CD8-positive, alpha-beta T cell (primary cell): ENCODE measurements at regions of chr2 and their contacts with region 1.

Region 1: DNA sequence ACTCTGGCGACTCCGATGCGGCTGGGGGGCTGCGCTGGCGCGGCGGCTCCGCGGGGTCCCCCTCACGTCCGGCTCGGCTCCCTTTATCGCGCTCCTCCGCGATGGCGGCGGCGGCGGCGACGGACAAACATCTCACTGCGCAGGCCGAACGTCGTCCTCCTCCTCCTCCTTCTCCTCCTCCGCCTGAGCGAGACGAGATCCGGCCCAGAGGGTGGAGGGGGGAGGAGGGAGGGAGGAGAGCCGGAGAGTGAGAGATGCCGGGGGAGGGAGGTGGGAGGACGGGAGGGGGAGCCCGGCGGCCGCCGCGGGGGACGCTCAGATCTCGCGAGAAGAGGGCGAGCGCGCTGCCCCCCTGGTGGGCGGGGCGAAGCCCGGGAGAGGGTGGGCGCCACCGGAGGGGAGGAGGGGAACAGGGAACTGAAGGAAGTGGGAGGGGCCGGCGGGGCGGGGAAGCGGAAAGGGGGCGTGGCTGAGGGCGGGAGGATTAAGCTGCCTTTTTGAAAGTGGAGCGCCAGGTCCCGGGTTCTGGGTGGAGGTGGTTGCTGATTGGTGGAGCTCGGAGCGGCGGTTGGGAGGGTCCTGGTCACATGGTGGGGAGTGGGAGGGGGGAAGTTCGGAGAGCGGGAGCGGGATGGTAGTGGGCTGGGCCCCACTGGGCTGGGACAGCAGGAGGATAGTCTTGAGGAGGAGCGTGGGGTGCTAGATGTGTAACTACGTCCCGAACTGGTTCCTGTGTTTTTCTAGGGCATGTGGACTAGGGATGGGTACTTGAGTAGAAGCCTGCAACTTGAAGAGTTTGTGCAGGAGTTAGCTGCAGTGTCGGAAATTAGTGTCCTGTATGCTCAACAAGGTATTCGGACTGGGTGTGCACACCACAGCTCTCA is at the start of gene CUL3:
- DNase-seq: peak; percentile 98 to 100 (median 99)
- ATAC-seq: peak; percentile 91
- H3K4me3 ChIP-seq: peak within 1 kb of the TSS; percentile 78 to 82
- H3K4me3 Mint-ChIP-seq: peak within 1 kb of the TSS; percentile 98
- H3K27ac ChIP-seq: peak within 1 kb of the TSS; percentile 62 to 84
- H3K27ac Mint-ChIP-seq: peak within 1 kb of the TSS; percentile 95
- H3K4me1 ChIP-seq: peaks cover 37% of the 10 kb centered on the region
- H3K4me1 Mint-ChIP-seq: peaks cover 42% of the 10 kb centered on the region
- H3K27me3 ChIP-seq: no peaks in the 10 kb centered on the region
- H3K27me3 Mint-ChIP-seq: no peaks in the 10 kb centered on the region
- CTCF ChIP-seq: no peak
- total RNA-seq, gene CUL3: 119 to 121 TPM

Region 2: DNA sequence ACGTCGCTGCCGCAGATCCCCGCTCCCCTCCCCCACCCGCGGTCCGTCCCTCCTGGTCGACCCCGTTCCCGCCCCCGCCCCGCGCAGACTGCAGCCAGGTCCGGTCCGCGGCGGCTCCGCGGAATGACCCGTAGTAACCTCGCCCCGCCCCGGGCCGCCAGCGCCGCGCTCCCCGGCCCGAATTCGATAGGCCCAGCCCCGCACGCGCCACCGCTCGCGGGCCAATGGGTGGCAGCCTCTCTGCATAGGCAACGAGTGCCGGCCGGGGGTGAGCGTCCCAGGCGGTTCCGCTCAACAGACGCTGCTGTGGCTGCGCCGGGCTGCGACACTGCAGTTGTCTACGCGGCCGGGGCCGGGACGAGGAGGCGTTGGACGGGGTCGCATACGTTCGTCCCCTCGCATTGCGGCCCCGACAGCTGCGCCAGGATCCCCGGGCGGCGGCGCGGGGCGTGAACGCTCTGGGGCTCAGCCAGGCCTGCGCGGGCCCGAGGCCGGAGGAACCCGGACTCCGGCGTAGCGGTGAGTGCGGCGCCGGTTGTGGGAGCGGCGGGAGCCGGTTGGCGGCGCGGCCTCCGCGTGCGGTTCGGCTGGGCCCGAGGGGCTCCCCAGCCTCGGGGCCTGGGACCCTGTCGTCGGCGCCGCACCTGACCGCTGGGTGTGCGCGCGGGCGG is 1724.6 kb before region 1 on chr2 and contains the start of gene ACSL3:
- CTCF ChIA-PET with region 1: no interaction called
- POLR2A ChIA-PET with region 1: no interaction called
- intact Hi-C with region 1: loop called in 1 of 2 experiments (anchors 2 kb)
- DNase-seq: peak; percentile 83 to 93 (median 92)
- ATAC-seq: peak; percentile 96
- H3K4me3 ChIP-seq: peak within 1 kb of the TSS; percentile 64 to 69
- H3K4me3 Mint-ChIP-seq: peak within 1 kb of the TSS; percentile 82
- H3K27ac ChIP-seq: peak within 1 kb of the TSS; percentile 69 to 80
- H3K27ac Mint-ChIP-seq: peak within 1 kb of the TSS; percentile 91
- H3K4me1 ChIP-seq: peaks cover 25% of the 10 kb centered on the region
- H3K4me1 Mint-ChIP-seq: peaks cover 7% of the 10 kb centered on the region
- H3K27me3 ChIP-seq: no peaks in the 10 kb centered on the region
- H3K27me3 Mint-ChIP-seq: no peaks in the 10 kb centered on the region
- CTCF ChIP-seq: no peak
- total RNA-seq, gene ACSL3: 89.5 to 97.6 TPM

Region 3: DNA sequence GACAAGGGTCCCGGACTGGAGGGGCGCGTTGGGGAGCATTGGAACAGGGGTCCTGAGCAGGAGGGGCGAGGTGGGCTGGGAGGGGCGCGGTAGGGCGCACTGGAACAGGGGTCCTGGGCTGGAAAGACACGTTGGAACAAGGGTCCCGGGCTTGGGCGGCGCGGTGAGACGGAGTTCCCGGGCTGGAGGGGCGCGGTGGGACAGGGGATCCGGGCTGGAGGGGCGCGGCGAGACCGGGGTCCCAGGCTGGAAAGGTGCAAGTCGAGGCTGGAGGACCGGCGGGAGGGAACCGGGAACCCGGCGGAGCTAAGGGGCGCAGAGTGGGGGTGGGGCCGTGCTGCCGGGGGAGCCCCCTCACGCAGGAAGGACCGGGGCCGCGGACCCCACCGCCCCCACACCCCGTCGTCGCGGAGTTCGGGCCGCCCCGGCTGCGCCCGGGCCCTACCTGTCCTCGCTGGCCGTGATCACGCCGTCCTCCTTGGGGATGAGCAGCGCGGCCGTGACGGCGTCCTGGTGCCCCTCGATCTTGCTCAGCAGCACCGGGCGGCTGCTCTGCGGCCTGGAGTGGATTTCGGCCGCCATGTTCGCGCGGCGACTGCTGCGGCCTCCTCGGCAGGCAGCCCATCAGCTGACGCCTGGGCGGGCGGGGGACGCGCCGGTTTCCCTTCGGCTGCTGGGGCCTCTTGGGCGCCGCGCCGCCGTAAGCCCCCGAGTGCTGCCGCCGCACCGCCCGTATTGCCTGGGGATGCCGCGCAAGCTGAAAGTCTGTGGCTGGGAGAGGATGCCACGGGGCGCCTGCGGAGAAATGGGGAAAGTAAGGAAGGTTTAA is 640.5 kb before region 1 on chr2 and contains the start of gene WDFY1:
- CTCF ChIA-PET with region 1: no interaction called
- POLR2A ChIA-PET with region 1: no interaction called
- intact Hi-C with region 1: loop called in 1 of 2 experiments (anchors 1 kb)
- DNase-seq: peak; percentile 59 to 88 (median 79)
- ATAC-seq: peak; percentile 82
- H3K4me3 ChIP-seq: peak within 1 kb of the TSS; percentile 83 to 86
- H3K4me3 Mint-ChIP-seq: peak within 1 kb of the TSS; percentile 92
- H3K27ac ChIP-seq: peak within 1 kb of the TSS; percentile 62 to 63
- H3K27ac Mint-ChIP-seq: peak within 1 kb of the TSS; percentile 85
- H3K4me1 ChIP-seq: peaks cover 30% of the 10 kb centered on the region
- H3K4me1 Mint-ChIP-seq: peaks cover 43% of the 10 kb centered on the region
- H3K27me3 ChIP-seq: no peaks in the 10 kb centered on the region
- H3K27me3 Mint-ChIP-seq: no peaks in the 10 kb centered on the region
- CTCF ChIP-seq: no peak
- total RNA-seq, gene WDFY1: 38.6 to 42.6 TPM

Region 4: DNA sequence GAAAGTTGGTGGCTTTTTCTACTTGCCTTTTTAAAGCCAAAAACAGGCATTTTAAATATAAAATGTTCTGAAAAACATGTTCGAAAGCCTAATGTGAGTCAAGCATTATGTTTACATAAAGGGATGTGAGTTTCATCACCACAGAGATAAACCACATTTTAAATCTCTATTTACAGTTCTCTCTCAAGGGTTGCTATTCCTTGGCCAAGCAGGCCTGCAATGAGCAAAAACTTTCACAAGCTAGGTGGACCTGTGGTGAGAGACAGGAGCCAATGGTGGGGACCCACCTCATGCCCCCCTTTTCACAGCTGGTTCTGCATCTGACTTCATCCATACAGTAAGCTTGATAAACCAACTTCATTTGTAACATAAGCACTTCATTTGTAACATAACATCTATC is 65.4 kb before region 1 on chr2:
- CTCF ChIA-PET with region 1: no interaction called
- POLR2A ChIA-PET with region 1: no interaction called
- intact Hi-C with region 1: loop called in 1 of 2 experiments (anchors 5 kb)
- DNase-seq: peak in 7 of 9 experiments; percentile 4 to 53 (median 29)
- ATAC-seq: peak; percentile 62
- H3K4me3 ChIP-seq: no peak overlapping the region
- H3K4me3 Mint-ChIP-seq: peak overlapping the region; percentile 13
- H3K27ac ChIP-seq: no peak overlapping the region
- H3K27ac Mint-ChIP-seq: peak overlapping the region; percentile 55
- H3K4me1 ChIP-seq: peaks cover 42% of the 10 kb centered on the region
- H3K4me1 Mint-ChIP-seq: peaks cover 69% of the 10 kb centered on the region
- H3K27me3 ChIP-seq: no peaks in the 10 kb centered on the region
- H3K27me3 Mint-ChIP-seq: no peaks in the 10 kb centered on the region
- CTCF ChIP-seq: no peak

Region 5: DNA sequence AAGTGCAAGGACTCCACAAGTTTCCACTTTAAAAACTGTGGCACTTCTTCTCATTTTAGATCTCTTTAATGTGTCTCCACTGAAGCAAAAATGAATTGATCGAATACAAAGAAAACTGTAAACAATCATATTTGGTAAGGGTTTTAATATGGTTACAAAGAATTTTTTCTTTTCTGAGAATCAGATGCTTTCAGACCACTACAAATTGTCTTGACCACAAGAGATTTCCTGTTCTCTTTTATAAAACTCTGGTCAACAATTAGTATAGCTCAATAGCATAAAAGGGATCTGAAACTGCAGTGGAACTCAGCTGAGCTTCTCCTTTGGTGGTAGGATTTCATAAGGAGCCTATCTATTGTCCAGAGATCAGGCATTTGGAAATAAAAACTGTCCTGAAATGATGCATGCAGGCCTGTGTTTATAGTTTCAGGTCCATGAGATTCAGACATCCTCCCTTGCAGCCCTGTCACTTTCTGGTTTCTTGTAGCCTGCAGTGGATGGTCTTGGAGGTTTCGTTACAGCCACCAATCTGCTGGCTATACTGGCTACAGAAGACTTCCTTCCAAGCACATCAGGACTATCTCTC is 336.8 kb after region 1 on chr2:
- CTCF ChIA-PET with region 1: no interaction called
- POLR2A ChIA-PET with region 1: no interaction called
- intact Hi-C with region 1: loop called in 1 of 2 experiments (anchors 10 kb)
- DNase-seq: peak in 1 of 9 experiments; percentile 41
- ATAC-seq: no peak
- H3K4me3 ChIP-seq: no peak overlapping the region
- H3K4me3 Mint-ChIP-seq: peak overlapping the region; percentile 4
- H3K27ac ChIP-seq: peak overlapping the region in 1 of 2 experiments; percentile 77
- H3K27ac Mint-ChIP-seq: peak overlapping the region; percentile 85
- H3K4me1 ChIP-seq: peaks cover 57% of the 10 kb centered on the region
- H3K4me1 Mint-ChIP-seq: peaks cover 57% of the 10 kb centered on the region
- H3K27me3 ChIP-seq: no peaks in the 10 kb centered on the region
- H3K27me3 Mint-ChIP-seq: no peaks in the 10 kb centered on the region
- CTCF ChIP-seq: no peak

Region 6: GRCh38 chr2:224946895-224947294 is 361.4 kb after region 1 on chr2:
- CTCF ChIA-PET with region 1: no interaction called
- POLR2A ChIA-PET with region 1: no interaction called
- intact Hi-C with region 1: loop called in 1 of 2 experiments (anchors 10 kb)
- DNase-seq: peak in 2 of 9 experiments; percentile 64 to 84
- ATAC-seq: peak; percentile 78
- H3K4me3 ChIP-seq: peak overlapping the region; percentile 59 to 76
- H3K4me3 Mint-ChIP-seq: peak overlapping the region; percentile 89
- H3K27ac ChIP-seq: peak overlapping the region; percentile 72 to 81
- H3K27ac Mint-ChIP-seq: peak overlapping the region; percentile 97
- H3K4me1 ChIP-seq: peaks cover 73% of the 10 kb centered on the region
- H3K4me1 Mint-ChIP-seq: peaks cover 76% of the 10 kb centered on the region
- H3K27me3 ChIP-seq: no peaks in the 10 kb centered on the region
- H3K27me3 Mint-ChIP-seq: no peaks in the 10 kb centered on the region
- CTCF ChIP-seq: no peak

Region 7: DNA sequence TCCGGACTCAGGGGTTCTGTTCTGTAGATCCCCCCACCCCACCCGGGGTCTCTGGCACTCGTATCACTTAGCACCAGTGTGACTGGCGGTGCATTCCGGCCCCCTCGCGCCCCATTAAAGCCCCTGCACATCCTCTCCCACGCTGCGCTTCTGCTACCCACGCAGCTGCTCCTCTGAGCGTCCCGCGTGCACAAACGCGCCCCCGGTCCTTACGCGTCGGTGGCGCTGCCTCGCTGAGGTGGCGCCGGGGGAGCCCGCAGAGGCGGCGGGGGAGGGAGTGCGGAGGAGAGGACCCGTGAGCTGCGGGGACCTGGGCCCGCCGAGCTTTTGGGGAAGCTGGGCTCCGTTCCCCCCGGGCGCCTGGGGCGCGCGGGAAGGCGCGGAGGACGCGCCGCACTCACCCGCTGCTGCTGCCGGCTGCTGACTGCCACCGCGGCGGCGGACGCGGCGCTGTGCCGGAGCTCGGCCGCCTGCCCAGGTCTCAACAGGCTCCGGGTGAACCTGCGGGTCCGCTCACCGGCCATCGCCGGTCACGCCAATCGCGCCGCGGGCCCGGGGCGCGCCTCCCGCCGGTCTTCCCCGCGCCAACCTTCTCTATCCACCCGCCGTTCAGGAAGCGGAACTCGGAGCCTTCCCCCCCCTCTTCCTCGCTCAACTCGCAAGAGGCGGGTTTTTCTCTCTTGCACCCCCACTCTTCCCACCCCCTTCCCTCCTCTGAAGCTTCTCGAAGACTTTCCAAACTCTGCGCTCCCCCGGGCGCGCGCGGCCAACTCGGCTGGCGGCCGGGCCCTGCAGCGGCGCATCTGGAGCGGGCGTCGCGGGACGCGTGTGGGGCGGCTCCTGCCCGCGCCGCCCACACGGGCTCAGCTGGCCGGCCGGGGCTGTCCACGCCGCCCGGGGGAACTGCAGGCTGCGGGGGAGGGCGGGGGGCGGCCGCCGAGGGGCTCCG is 456.7 kb after region 1 on chr2 and contains the start of gene DOCK10:
- CTCF ChIA-PET with region 1: no interaction called
- POLR2A ChIA-PET with region 1: no interaction called
- intact Hi-C with region 1: loop called in 1 of 2 experiments (anchors 10 kb)
- DNase-seq: peak; percentile 29 to 81 (median 57)
- ATAC-seq: peak; percentile 60
- H3K4me3 ChIP-seq: peak within 1 kb of the TSS; percentile 87 to 88
- H3K4me3 Mint-ChIP-seq: peak within 1 kb of the TSS; percentile 98
- H3K27ac ChIP-seq: peak within 1 kb of the TSS; percentile 73 to 77
- H3K27ac Mint-ChIP-seq: peak within 1 kb of the TSS; percentile 97
- H3K4me1 ChIP-seq: peaks cover 50% of the 10 kb centered on the region
- H3K4me1 Mint-ChIP-seq: peaks cover 55% of the 10 kb centered on the region
- H3K27me3 ChIP-seq: no peaks in the 10 kb centered on the region
- H3K27me3 Mint-ChIP-seq: no peaks in the 10 kb centered on the region
- CTCF ChIP-seq: no peak
- total RNA-seq, gene DOCK10: 183 to 188 TPM